B cell (primary cell): ENCODE measurements at regions of chr6 and their contacts with region 1.

Region 1: DNA sequence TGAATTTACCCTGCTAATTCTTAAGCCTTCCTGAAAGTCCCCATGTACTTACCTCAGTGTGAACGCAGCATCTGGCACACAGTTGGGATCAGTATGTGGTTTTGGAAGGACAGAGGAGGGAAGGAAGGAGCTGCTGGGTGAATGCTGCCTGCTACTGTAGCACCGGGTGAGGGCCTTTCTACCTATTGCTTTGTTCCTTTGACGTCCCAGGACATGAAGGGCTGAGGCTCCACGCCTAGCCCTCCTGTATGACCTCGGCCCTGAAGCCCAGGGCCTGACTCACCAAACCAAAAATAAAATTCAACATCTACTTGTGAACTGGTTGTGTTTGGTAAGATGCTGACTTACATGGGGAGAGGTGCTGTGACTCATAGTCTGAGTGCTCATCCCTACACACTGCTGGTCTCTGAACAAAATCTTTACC is 51.1 kb downstream of the ARID1B start:
- DNase-seq: no peak
- ATAC-seq: peak; percentile 45
- H3K4me3 ChIP-seq: no peak overlapping the region
- H3K4me3 Mint-ChIP-seq: no peak overlapping the region
- H3K27ac ChIP-seq: peak overlapping the region in 1 of 2 donors; percentile 9
- H3K27ac Mint-ChIP-seq: peak overlapping the region; percentile 62
- H3K4me1 ChIP-seq: peaks cover 30 to 36% of the 10 kb centered on the region in 2 donors
- H3K4me1 Mint-ChIP-seq: peaks cover 75% of the 10 kb centered on the region
- H3K27me3 ChIP-seq: no peaks in the 10 kb centered on the region
- H3K27me3 Mint-ChIP-seq: no peaks in the 10 kb centered on the region
- CTCF ChIP-seq: no peak

Region 2: DNA sequence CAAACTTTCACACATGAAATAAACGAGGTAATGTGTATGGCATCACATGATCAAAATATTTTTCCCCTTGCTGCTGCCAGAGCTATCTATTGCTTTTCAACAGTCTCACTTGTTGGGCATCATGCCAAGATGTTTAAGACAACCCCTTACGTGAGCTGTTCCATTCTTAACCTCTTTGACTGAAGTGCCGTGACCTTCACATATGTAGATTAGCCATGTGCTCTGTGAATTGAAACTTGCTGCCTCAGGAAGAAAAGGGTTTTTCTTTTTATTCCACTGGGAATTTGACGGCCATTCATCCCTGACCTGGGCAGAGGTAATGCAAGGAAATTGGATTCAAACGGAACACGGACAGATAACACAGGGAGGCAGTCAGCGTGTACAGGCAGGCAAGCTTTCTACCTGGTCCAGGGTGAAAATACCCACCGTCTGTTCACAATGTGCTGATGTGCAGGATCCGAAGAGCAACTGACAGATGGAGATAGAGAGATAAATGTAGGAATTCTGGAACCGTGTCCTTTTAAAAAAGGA is 36.9 kb before region 1 on chr6:
- CTCF ChIA-PET with region 1: no interaction called
- POLR2A ChIA-PET with region 1: interaction called, 13 read pairs
- intact Hi-C with region 1: no loop called
- DNase-seq: peak; percentile 83
- ATAC-seq: peak; percentile 84
- H3K4me3 ChIP-seq: no peak overlapping the region
- H3K4me3 Mint-ChIP-seq: peak overlapping the region; percentile 63
- H3K27ac ChIP-seq: peak overlapping the region in 1 of 2 donors; percentile 44
- H3K27ac Mint-ChIP-seq: peak overlapping the region; percentile 60
- H3K4me1 ChIP-seq: peaks cover 77 to 88% of the 10 kb centered on the region in 2 donors
- H3K4me1 Mint-ChIP-seq: peaks cover 95% of the 10 kb centered on the region
- H3K27me3 ChIP-seq: no peaks in the 10 kb centered on the region
- H3K27me3 Mint-ChIP-seq: no peaks in the 10 kb centered on the region
- CTCF ChIP-seq: no peak

Region 3: DNA sequence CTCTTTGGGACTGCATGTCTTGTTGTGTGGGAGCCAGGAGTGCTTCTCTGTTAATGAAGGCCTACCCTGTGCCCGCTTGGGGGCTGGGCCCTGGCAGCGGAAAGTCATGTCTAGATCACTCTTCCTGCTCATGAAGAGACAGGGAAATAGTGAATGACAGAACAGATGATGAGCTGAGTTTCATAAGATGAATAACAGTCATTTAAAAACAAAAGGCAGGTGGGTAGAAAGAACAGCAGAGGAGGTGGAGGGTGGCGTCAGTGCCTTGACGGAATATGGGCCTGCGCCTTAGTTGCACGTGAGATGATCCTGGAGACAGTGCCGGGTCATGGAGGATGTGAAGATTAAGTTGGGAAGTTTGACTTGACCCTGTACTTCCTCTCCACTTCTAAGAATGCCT is 34.4 kb after region 1 on chr6:
- CTCF ChIA-PET with region 1: no interaction called
- POLR2A ChIA-PET with region 1: no interaction called
- intact Hi-C with region 1: loop called (anchors 5 kb)
- DNase-seq: no peak
- ATAC-seq: no peak
- H3K4me3 ChIP-seq: no peak overlapping the region
- H3K4me3 Mint-ChIP-seq: peak overlapping the region; percentile 15
- H3K27ac ChIP-seq: peak overlapping the region in 1 of 2 donors; percentile 40
- H3K27ac Mint-ChIP-seq: peak overlapping the region; percentile 38
- H3K4me1 ChIP-seq: peaks cover 47 to 55% of the 10 kb centered on the region in 2 donors
- H3K4me1 Mint-ChIP-seq: peaks cover 85% of the 10 kb centered on the region
- H3K27me3 ChIP-seq: no peaks in the 10 kb centered on the region
- H3K27me3 Mint-ChIP-seq: no peaks in the 10 kb centered on the region
- CTCF ChIP-seq: no peak

Region 4: DNA sequence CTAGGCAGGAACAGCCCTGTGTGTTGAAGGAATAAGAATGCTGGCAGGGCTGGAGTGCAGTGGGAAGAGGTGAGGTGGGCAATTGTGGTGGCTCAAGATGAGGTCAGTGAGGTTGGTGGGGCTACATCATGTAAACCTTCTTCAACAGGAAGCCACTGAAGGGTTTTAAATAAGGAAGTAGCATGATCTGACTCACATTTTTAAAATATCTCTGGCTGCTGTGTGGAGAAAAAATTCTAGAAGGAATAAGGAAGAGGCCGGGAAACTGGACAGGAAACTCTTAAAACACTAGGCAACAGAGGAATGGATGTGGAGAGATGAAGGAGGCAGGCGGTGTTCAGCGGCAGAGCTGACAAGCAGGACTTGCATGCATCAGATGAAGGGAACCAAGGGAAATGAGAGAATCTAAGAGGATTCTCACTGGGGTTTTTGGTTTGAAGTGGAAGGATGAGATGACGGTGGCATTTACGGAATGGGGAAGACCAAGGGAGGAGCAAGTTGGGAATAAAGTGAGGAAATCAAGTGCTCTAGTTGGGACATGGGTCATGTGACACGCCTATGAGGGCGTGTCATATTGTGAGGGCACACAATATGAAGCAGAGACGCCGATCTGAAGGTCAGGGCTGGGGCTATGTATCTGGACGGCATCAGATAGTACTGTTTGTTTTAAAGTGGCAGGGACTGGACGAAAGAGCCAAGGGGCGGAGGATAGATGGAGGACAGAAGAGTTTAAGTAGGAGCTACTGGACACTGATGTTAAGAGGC is 476.8 kb after region 1 on chr6:
- CTCF ChIA-PET with region 1: no interaction called
- POLR2A ChIA-PET with region 1: no interaction called
- intact Hi-C with region 1: no loop called
- DNase-seq: no peak
- ATAC-seq: peak; percentile 24
- H3K4me3 ChIP-seq: no peak overlapping the region
- H3K4me3 Mint-ChIP-seq: no peak overlapping the region
- H3K27ac ChIP-seq: peak overlapping the region in 1 of 2 donors; percentile 25
- H3K27ac Mint-ChIP-seq: no peak overlapping the region
- H3K4me1 ChIP-seq: peaks cover 15 to 18% of the 10 kb centered on the region in 2 donors
- H3K4me1 Mint-ChIP-seq: peaks cover 4% of the 10 kb centered on the region
- H3K27me3 ChIP-seq: no peaks in the 10 kb centered on the region
- H3K27me3 Mint-ChIP-seq: no peaks in the 10 kb centered on the region
- CTCF ChIP-seq: no peak